ENCODE measurements at regions of chr7 and their contacts with region 1.

Region 1: GRCh38 chr7:20598459-20599309 is 16.8 kb upstream of the ABCB5 start:
- DNase-seq: no peak
- ATAC-seq: peak; percentile 75
- H3K4me3 ChIP-seq: no peak overlapping the region
- H3K4me1 ChIP-seq: no peaks in the 10 kb centered on the region
- CTCF ChIP-seq: peak; percentile 24

Region 2: DNA sequence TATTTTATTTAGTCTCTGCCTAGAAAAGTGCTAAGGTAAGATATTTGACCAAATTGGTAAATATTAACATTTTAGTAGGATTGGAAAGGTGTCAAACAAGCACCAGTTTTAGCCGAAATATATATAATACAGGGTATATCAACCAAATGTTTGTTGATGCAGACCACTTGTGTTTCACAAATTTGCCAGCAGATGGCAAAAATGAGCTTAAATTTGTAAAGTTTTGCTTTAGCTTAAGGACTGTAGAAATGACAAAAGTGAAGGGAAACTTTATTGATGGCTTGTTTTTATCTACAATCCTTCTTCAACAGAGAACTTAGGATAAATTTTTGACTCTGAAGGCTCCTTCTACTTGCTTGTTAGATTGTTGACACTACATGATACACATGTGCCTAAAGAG is 885.0 kb before region 1 on chr7:
- intact Hi-C with region 1: loop called (anchors 10 kb)
- DNase-seq: peak in 1 of 3 donors; percentile 63
- ATAC-seq: no peak
- H3K4me3 ChIP-seq: no peak overlapping the region
- H3K4me1 ChIP-seq: no peaks in the 10 kb centered on the region
- CTCF ChIP-seq: no peak

Region 3: DNA sequence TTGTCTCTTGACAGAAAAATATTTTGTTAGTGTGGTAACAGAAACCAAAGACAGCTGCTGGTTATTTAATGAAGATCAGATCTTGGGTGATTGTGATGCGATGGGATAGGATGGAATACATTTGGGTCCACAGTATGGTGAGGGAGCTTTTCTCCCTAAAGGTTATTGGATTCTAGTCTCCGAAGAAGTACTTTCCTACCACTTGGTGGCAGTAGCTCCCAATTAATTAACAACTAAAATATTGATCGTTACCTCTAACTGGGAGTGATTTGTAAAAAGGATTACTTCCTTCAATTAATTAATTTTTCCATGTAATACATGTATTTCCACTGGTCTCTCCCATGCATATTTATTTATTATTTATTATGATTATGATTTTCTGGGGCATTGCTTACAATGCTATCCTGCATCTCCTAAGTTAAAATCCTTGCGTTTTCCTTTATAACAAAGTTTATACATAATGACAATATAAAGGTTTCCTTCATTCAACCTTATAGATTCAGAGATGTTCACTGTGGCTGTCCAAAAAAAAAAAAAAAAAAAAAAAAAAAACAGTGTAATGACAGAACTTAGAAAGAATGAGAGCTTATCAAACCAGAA is 850.8 kb before region 1 on chr7:
- intact Hi-C with region 1: loop called (anchors 5 to 10 kb)
- DNase-seq: peak in 1 of 3 donors; percentile 10
- ATAC-seq: no peak
- H3K4me3 ChIP-seq: no peak overlapping the region
- H3K4me1 ChIP-seq: no peaks in the 10 kb centered on the region
- CTCF ChIP-seq: no peak

Region 4: DNA sequence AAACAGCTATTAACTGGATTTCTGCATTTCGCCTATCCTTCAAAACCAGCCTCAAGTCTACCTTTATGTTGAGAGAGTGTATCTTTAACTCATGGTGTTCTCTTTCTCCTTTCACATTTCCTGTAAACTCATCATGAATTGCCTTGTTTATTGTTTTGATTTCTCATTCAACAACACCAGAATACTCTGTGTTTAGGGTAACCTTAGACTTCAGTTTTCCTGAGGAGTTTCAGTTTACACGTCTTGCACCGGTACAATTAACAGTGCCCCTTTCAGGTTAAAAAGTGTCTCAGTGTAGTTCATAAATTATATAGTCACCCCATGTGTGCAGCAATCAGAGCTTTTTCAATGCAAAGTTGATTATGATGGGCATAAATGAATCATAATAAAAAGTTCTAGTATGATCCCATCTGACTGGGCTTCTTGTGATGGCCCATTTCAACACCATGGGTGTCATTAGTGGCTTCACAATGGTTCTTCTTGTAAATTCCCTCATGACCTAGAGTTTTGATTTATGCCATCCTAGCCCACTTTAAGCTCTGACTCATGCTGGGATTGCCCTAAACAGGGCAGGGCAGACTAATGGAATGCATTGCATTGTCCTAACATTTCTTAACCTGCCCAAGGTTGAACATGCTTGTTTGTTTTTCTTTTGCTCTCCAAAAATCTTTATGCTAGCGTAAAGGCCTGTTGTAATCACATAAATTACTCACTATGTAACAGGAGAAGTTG is 245.9 kb before region 1 on chr7:
- intact Hi-C with region 1: no loop called
- DNase-seq: no peak
- ATAC-seq: peak; percentile 66
- H3K4me3 ChIP-seq: no peak overlapping the region
- H3K4me1 ChIP-seq: peaks cover 11% of the 10 kb centered on the region
- CTCF ChIP-seq: no peak

Region 5: GRCh38 chr7:20417260-20417659 is 181.4 kb before region 1 on chr7:
- intact Hi-C with region 1: no loop called
- DNase-seq: peak in 1 of 3 donors; percentile 27
- ATAC-seq: peak; percentile 69
- H3K4me3 ChIP-seq: no peak overlapping the region
- H3K4me1 ChIP-seq: peaks cover 7% of the 10 kb centered on the region
- CTCF ChIP-seq: no peak

Region 6: DNA sequence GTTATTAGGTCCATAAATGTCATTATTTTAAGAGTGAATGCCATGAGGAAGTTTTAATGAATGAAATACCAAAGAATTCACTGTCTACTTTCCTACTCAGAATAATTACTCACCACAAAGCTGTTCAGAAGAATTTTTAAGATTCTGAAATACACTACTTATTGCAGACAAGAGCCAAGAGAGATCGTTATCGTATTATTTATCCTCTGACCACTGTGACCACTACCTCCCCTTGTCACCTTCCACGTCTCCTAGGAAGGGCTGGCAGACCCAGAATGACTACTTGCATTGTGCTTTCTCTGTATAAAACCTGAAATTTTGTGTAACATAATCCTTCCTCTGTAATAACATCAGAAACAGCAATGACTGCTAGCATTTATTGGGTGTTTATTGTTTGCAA is 98.7 kb after region 1 on chr7:
- intact Hi-C with region 1: no loop called
- DNase-seq: no peak
- ATAC-seq: no peak
- H3K4me3 ChIP-seq: no peak overlapping the region
- H3K4me1 ChIP-seq: no peaks in the 10 kb centered on the region
- CTCF ChIP-seq: no peak